ENCODE measurements at regions of chrX and their contacts with region 1.

Region 1: DNA sequence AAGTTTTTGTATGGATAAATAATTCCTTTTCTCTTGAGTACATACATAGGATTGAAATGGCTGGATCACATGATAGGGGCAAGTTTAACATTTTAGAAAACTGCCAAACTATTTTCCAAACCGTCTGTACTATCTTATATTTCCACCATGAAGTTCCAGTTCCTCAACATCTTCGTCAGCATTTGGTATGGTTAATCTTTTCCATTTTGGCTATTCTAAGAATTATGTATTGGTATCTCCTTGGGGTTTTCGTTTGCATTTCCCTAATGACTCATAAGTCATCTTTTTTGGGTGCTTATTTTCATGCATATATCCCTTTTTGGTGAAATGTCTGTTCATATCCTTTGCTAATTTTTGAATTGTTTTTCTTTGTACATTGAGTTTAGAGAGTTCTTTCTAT is 227.7 kb downstream of the DLG3 start:
- DNase-seq: no peak
- H3K4me3 Mint-ChIP-seq: peak overlapping the region; percentile 45
- H3K27ac Mint-ChIP-seq: peak overlapping the region; percentile 90
- H3K4me1 Mint-ChIP-seq: peaks cover 32% of the 10 kb centered on the region
- H3K27me3 Mint-ChIP-seq: no peaks in the 10 kb centered on the region

Region 2: GRCh38 chrX:69627744-69628143 is 1044.6 kb before region 1 on chrX:
- intact Hi-C with region 1: loop called (anchors 10 kb)
- DNase-seq: no peak
- H3K4me3 Mint-ChIP-seq: no peak overlapping the region
- H3K27ac Mint-ChIP-seq: no peak overlapping the region
- H3K4me1 Mint-ChIP-seq: peaks cover 25% of the 10 kb centered on the region
- H3K27me3 Mint-ChIP-seq: no peaks in the 10 kb centered on the region

Region 3: DNA sequence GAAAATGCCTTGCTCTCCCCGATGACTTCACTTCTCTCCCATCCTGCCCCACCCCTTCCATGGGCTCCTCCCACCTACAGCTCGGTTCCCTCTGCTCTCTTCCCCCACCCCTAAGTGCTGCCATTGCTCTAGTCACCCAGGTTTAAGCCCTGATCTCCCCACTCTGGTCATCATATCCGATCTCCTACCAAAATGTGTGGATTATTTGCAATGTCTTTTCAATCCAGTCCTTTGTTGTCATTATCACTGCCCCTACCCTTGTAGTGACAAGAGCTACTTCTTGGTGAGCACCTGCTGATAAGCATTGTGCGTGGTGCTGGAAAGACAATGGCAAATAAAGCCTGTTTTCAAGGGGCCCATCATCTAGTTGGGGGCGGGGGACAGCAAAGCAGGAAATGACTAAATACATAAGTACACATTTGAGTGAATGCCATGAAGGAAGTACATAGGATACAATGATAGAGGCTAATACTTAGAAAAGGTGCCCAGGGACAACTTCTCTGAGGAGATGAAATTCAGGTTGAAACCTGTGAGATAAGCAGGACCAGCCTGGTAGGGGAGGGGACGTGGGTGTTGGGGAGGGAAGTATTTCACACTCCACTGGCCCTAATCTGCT is 163.9 kb before region 1 on chrX:
- intact Hi-C with region 1: loop called (anchors 5 kb)
- DNase-seq: no peak
- H3K4me3 Mint-ChIP-seq: peak overlapping the region; percentile 20
- H3K27ac Mint-ChIP-seq: peak overlapping the region; percentile 82
- H3K4me1 Mint-ChIP-seq: peaks cover 51% of the 10 kb centered on the region
- H3K27me3 Mint-ChIP-seq: no peaks in the 10 kb centered on the region

Region 4: GRCh38 chrX:70635227-70635626 is 37.1 kb before region 1 on chrX:
- intact Hi-C with region 1: no loop called
- DNase-seq: no peak
- H3K4me3 Mint-ChIP-seq: no peak overlapping the region
- H3K27ac Mint-ChIP-seq: no peak overlapping the region
- H3K4me1 Mint-ChIP-seq: no peaks in the 10 kb centered on the region
- H3K27me3 Mint-ChIP-seq: no peaks in the 10 kb centered on the region

Region 5: DNA sequence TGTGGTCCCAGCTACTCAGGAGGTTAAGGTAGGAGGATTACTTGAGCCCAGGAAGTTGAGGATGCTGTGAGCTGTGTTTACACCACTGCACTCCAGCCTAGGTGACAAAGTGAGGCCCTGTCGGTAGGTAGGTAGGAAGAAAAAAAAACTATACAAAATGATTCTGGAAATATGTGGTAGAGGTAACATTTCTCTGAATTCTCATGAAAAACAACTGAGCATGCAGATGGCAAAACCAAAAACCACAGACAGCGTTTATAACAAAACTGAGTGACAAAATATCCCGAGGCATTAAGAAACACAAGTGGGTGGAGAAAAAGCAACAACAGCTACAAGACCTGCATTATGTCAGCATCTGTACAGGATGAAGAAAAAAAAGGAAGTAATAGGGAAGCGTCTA is 16.0 kb before region 1 on chrX:
- intact Hi-C with region 1: loop called (anchors 1 kb)
- DNase-seq: no peak
- H3K4me3 Mint-ChIP-seq: peak overlapping the region; percentile 4
- H3K27ac Mint-ChIP-seq: peak overlapping the region; percentile 82
- H3K4me1 Mint-ChIP-seq: peaks cover 9% of the 10 kb centered on the region
- H3K27me3 Mint-ChIP-seq: no peaks in the 10 kb centered on the region

Region 6: DNA sequence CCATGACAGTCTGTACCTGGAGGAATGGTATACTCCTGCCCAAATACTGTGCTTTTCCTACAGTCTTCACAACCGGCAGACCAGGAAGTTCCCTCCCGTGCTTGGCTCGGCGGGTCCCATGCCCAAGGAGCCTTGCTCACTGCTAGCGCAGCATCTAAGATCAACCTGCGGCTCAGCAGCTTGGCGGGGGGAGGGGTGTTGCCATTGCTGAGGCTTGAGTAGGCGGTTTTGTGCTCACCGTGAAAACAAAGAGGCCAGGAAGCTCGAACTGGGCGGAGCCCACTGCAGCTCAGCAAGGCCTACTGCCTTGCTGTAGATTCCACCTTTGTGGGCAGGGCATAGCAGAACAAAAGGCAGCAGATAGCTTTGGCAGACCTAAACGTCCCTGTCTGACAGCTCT is 83.5 kb after region 1 on chrX:
- intact Hi-C with region 1: loop called (anchors 5 kb)
- DNase-seq: peak; percentile 50
- H3K4me3 Mint-ChIP-seq: no peak overlapping the region
- H3K27ac Mint-ChIP-seq: peak overlapping the region; percentile 8
- H3K4me1 Mint-ChIP-seq: peaks cover 27% of the 10 kb centered on the region
- H3K27me3 Mint-ChIP-seq: no peaks in the 10 kb centered on the region

Region 7: GRCh38 chrX:70970482-70970995 is 298.2 kb after region 1 on chrX:
- intact Hi-C with region 1: no loop called
- DNase-seq: no peak
- H3K4me3 Mint-ChIP-seq: no peak overlapping the region
- H3K27ac Mint-ChIP-seq: no peak overlapping the region
- H3K4me1 Mint-ChIP-seq: peaks cover 6% of the 10 kb centered on the region
- H3K27me3 Mint-ChIP-seq: peaks cover 8% of the 10 kb centered on the region